Activated naive CD8-positive, alpha-beta T cell treated with anti-CD3 and anti-CD28 coated beads, Interleukin-2, amount 10 ng/mL, durations not matched to agents 7 days and 5 days (primary cell): ENCODE measurements at regions of chr7 and their contacts with region 1.

Region 1: DNA sequence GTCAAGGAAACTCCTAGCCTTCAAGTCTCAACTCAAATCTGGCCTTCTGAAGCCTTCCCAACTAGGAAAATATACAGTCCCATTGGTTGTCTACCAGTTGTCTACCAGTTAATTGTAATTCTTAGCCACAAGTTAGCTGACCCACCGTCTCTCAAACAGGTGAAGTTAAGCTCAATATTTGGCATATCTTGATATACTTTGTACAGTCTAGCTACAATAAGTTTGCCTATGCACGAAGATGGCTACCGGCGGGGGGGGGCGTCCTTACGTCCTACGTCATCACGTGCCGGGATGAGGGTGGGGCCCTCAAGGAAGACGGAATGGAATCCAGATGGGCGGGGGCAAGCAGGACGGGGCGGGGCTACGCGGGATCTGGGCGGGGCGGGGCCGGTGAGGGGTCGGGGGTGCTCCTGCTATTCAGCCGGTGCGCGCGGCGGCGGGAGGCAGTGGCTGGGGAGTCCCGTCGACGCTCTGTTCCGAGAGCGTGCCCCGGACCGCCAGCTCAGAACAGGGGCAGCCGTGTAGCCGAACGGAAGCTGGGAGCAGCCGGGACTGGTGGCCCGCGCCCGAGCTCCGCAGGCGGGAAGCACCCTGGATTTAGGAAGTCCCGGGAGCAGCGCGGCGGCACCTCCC is at the start of gene AHR:
- DNase-seq: peak; percentile 82
- ATAC-seq: peak; percentile 83
- H3K4me3 Mint-ChIP-seq: peak within 1 kb of the TSS; percentile 97
- H3K27ac Mint-ChIP-seq: peak within 1 kb of the TSS; percentile 96
- H3K4me1 Mint-ChIP-seq: peaks cover 19% of the 10 kb centered on the region
- H3K27me3 Mint-ChIP-seq: no peaks in the 10 kb centered on the region
- total RNA-seq, gene AHR: 49.0 to 50.6 TPM

Region 2: GRCh38 chr7:17139081-17139480 is 159.2 kb before region 1 on chr7:
- POLR2A ChIA-PET with region 1: interaction called, 15 read pairs
- DNase-seq: no peak
- ATAC-seq: peak; percentile 91
- H3K4me3 Mint-ChIP-seq: peak overlapping the region; percentile 78
- H3K27ac Mint-ChIP-seq: peak overlapping the region; percentile 96
- H3K4me1 Mint-ChIP-seq: peaks cover 63% of the 10 kb centered on the region
- H3K27me3 Mint-ChIP-seq: no peaks in the 10 kb centered on the region